GM13977 (cell line): ENCODE measurements at regions of chr15 and their contacts with region 1.

Region 1: GRCh38 chr15:64651573-64652260 is 123.7 kb downstream of the RBPMS2 start:
- DNase-seq: peak; percentile 63
- CTCF ChIP-seq: no peak

Region 2: DNA sequence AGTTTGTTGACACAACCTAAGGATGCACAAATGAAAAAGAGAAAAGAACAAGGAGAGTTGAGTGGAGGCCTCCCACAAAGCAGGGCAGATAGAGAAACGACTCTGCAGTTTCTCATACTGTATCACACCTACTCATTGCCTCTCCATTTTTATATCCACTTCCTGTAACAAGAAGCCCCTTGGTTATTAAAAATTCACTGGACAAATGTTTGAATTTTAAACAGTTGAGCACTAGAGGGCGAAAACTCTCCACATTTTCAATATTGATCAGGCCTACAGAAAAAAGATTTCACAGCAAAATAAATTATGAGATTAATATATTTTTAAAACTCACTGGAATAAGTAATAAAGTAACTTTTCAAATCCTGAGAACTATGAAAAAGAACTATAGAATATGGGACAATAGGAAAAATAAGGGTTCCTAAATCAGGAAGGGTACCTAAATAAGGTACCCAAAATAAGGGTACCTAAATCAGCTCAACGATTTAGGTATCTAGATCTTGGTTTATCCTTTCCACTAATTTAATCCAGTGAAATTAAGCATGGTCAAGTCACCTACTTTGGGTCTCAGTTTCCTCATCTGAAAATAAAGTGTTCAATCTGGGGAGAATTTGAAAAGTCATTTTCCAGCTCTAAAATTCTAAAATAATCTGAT is 441.9 kb before region 1 on chr15:
- in situ Hi-C with region 1: loop called (anchors 25 kb)
- DNase-seq: peak; percentile 31
- CTCF ChIP-seq: peak; percentile 41

Region 3: DNA sequence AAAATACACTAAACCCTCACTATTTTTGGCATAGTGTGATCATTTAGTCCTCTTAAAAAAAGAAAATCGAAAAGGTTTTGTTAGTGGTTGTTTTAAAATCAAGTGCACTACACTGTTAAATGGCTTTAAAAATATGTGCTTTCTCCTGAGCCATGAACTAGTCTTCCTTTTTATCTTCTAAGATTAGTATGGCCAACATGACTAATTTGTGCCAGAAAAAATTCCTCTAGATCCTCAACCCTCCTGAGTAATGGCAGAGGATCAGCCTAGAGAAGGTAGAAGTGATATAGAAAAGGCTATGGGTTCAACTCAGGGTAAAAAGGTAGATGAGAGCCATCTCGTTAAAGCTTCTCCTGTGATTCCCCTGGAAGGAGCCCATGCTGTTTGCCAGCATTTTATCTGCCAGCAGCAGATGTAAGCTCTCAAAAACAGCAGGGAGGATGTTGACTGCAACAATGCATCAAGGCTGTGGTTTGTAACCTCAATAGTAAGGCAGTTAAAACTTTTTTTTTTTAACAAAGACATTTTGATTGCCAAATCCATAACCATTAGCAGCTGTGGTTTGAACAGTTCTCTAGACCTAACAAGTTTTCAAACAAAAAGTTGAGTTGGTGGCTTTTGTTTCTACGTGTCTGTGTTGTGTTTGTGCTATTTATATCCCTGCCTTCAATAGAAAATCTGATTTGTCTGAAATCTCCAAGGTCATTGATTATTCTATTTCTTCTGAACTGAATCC is 221.5 kb before region 1 on chr15:
- in situ Hi-C with region 1: loop called (anchors 25 kb)
- DNase-seq: peak; percentile 19
- CTCF ChIP-seq: no peak